Cardiac septum (tissue), 1 donor: ENCODE measurements at regions of chr12 and their contacts with region 1.

Region 1: DNA sequence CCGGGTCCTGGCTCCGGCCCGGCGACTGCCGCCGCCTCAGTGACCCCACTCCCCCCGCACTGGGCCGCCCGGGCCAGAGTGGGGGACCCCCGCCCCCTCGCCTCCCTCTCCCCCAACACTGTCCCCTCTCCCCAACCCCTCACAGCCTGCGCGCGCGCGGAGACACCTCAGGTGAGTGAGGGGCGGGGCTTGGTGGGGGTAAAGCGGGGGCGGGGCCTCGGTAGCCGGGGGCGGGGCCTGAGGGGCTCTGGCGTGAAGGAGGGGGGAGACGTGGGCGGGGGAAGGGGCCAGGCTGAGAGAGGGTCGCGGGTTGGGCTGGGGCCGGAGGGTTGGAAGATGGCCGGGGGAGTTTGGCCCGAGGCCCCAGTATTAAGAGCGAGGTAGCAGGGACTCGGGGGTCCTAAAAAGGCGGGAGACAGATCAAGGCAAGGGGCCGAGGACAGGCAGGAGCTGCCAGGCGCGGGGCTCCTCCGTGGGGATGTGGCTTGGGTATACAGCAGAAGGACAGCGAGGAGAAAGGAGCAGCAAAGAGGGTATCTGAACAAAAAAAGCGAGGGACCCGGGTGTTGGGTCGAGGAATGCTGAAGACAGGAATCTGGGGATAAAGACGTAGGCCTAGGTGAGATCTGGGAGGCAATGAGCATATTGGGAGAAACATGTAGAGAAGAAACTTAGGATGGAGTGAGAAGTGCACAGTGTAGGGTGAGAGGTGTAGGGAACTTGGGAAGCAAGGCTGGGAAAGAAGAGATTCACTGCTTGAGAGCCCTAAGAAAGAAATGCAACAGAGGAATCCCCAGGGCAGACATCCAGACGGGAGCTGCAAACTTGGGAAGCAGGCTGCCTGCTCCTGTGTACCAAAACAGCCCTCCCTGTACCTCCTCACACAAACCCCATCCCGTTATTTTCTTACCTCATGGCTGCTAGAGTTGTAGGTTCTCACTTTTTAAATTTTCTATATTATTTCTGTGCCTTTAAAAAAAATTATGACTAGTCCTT is 10.8 kb downstream of the SUOX start:
- DNase-seq: peak; percentile 78

Region 2: DNA sequence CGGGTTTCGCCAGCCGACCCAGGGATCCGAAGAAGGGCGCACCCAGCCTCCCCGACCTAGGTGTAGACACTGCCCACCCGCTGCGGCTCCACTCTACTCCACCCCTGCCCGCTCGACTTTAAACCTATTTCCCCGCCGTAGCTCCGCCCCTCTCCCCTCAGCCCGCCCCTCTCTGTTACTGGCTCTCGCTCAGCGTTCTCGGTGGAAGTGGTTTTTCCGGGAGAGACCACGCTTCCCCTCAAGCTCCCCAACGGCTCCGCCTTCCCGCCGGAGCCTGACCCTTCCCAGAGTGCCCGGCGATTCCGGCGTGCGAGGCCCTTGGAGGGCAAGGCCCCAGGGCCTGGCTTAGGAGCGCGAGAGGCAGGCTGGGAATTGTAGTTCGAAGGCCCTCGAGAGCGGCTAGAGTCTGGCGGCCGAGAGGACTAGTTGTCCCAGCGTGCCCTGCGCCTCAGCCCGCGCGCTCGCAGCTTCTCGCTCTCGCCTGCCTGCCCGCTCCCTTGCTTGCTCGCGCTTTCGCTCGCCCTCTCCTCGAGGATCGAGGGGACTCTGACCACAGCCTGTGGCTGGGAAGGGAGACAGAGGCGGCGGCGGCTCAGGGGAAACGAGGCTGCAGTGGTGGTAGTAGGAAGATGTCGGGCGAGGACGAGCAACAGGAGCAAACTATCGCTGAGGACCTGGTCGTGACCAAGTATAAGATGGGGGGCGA is 96.4 kb after region 1 on chr12 and contains the start of gene PA2G4:
- intact Hi-C with region 1: loop called (anchors 5 kb)
- DNase-seq: peak; percentile 99
- total RNA-seq, gene PA2G4: 61.6 TPM